BJ (cell line): ENCODE measurements at regions of chr6 and their contacts with region 1.

Region 1: GRCh38 chr6:16514249-16514648 is 247.0 kb downstream of the ATXN1 start:
- DNase-seq: no peak
- H3K4me3 ChIP-seq: no peak overlapping the region
- H3K27me3 ChIP-seq: no peaks in the 10 kb centered on the region
- CTCF ChIP-seq: peak; percentile 59

Region 2: GRCh38 chr6:16338577-16339262 is 175.5 kb before region 1 on chr6:
- CTCF ChIA-PET with region 1: interaction called, 10 read pairs
- POLR2A ChIA-PET with region 1: no interaction called
- DNase-seq: peak; percentile 98
- H3K4me3 ChIP-seq: no peak overlapping the region
- H3K27me3 ChIP-seq: no peaks in the 10 kb centered on the region
- CTCF ChIP-seq: peak; percentile 86